Right ventricle myocardium inferior (tissue), 1 donor: ENCODE measurements at regions of chr3 and their contacts with region 1.

Region 1: DNA sequence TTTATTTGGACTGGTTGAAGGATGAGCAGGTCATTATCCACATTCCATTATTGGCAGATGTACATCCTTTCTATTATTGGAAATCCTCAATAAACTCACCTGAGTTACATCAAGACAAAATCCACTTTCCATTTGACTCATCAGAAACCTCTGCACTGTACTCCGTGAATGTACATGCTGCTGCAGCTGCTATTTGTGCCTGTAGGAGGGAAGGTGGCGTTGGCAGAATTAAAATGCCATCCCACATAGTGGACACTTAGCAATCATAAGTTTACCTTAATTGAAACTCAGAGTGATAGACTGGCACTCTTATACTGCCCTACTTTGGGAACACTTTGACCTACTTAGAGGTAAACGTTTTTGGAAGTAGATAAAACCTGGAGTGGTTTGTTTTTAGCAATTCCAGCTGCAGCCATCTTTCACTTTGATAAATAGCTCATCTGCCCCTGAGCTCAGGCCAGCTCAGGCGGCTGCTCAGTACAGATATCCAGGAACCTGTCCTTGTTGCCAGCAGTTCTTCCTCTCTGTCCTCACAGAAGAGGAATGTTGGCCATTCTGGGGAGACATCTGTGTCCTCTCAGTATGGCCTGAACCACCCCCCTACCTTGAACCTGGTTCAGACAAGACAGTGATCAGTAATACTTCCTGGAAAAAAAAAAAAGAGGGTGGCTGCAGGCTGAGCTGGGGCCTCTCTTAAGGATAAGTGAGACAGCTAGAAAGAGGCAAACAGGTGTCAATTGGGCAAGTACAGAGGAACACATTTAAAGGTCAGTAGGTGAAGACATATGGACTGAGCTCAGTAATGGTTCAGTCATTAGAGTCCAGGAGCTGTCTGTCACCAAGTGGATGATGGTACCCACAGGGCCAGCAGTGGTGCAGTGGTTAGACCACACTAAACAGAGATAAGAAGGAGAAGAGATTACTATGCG is 153.4 kb upstream of the UMPS start:
- DNase-seq: no peak
- ATAC-seq: peak; percentile 86

Region 2: GRCh38 chr3:124615896-124616543 is 39.2 kb after region 1 on chr3:
- intact Hi-C with region 1: loop called (anchors 5 kb)
- DNase-seq: no peak
- ATAC-seq: peak; percentile 86

Region 3: DNA sequence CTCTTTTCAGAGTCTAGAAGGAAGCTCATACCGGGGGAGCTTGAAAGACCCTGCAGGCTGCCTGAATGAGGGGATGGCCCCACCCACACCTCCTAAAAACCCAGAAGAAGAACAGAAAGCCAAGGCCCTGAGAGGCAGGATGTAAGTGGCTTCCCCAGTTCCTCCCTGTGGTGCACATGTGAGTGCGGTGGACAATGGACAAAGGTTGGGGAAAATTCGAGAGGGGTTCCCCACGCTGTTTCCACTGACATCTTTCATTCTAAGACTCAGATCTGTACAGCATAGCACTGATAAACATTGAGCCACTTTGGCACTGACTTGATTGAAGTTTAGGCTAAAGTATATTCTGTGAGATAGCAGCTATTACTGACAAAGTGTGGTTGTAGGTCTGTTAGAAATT is 74.0 kb after region 1 on chr3:
- intact Hi-C with region 1: loop called (anchors 5 kb)
- DNase-seq: no peak
- ATAC-seq: no peak

Region 4: GRCh38 chr3:124905849-124906248 is 329.0 kb after region 1 on chr3:
- intact Hi-C with region 1: loop called (anchors 5 kb)
- DNase-seq: no peak
- ATAC-seq: no peak